ENCODE measurements at regions of chr9 and their contacts with region 1.

Region 1: GRCh38 chr9:109477258-109478050 is 20.7 kb downstream of the PTPN3 start:
- DNase-seq: peak; percentile 94
- H3K4me3 Mint-ChIP-seq: peak overlapping the region; percentile 60
- H3K27ac Mint-ChIP-seq: peak overlapping the region; percentile 99
- H3K4me1 Mint-ChIP-seq: peaks cover 77% of the 10 kb centered on the region
- H3K27me3 Mint-ChIP-seq: no peaks in the 10 kb centered on the region
- CTCF ChIP-seq: no peak

Region 2: GRCh38 chr9:109498195-109499092 is 21.0 kb after region 1 on chr9 and contains the start of gene PTPN3:
- CTCF ChIA-PET with region 1: interaction called, 6 read pairs
- intact Hi-C with region 1: loop called (anchors 2 kb)
- DNase-seq: peak; percentile 48
- H3K4me3 Mint-ChIP-seq: peak within 1 kb of the TSS; percentile 73
- H3K27ac Mint-ChIP-seq: peak within 1 kb of the TSS; percentile 71
- H3K4me1 Mint-ChIP-seq: peaks cover 22% of the 10 kb centered on the region
- H3K27me3 Mint-ChIP-seq: no peaks in the 10 kb centered on the region
- CTCF ChIP-seq: no peak
- total RNA-seq, gene PTPN3: 25.0 and 28.3 TPM in 2 replicates

Region 3: DNA sequence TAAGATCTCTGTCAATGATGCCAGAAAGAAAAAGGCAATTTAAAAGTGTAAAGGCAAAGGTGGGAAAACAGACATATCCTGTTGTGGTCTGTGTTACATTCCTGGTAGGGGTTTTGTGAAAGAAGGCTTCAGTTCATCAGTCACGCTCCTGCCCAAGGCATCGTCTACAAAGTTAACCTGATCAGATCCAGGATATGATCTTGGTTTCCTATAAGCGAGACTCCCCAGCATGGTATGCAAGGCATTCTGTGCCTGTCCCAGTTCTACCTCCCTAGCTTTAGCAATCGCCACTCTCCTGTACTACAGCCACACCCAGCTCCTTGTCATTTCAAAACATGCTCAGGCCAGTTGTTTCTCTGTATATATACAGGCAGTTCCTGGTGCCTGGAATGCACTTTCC is 78.6 kb after region 1 on chr9:
- CTCF ChIA-PET with region 1: no interaction called
- intact Hi-C with region 1: loop called (anchors 1 kb)
- DNase-seq: peak; percentile 50
- H3K4me3 Mint-ChIP-seq: no peak overlapping the region
- H3K27ac Mint-ChIP-seq: no peak overlapping the region
- H3K4me1 Mint-ChIP-seq: peaks cover 29% of the 10 kb centered on the region
- H3K27me3 Mint-ChIP-seq: no peaks in the 10 kb centered on the region
- CTCF ChIP-seq: no peak